OCI-LY7 (cell line): ENCODE measurements at regions of chr15 and their contacts with region 1.

Region 1: GRCh38 chr15:98442379-98442833 is 205.9 kb upstream of the IGF1R start:
- DNase-seq: peak; percentile 57
- H3K4me3 ChIP-seq: no peak overlapping the region
- H3K27ac ChIP-seq: no peak overlapping the region
- H3K4me1 ChIP-seq: no peaks in the 10 kb centered on the region
- CTCF ChIP-seq: peak; percentile 87

Region 2: DNA sequence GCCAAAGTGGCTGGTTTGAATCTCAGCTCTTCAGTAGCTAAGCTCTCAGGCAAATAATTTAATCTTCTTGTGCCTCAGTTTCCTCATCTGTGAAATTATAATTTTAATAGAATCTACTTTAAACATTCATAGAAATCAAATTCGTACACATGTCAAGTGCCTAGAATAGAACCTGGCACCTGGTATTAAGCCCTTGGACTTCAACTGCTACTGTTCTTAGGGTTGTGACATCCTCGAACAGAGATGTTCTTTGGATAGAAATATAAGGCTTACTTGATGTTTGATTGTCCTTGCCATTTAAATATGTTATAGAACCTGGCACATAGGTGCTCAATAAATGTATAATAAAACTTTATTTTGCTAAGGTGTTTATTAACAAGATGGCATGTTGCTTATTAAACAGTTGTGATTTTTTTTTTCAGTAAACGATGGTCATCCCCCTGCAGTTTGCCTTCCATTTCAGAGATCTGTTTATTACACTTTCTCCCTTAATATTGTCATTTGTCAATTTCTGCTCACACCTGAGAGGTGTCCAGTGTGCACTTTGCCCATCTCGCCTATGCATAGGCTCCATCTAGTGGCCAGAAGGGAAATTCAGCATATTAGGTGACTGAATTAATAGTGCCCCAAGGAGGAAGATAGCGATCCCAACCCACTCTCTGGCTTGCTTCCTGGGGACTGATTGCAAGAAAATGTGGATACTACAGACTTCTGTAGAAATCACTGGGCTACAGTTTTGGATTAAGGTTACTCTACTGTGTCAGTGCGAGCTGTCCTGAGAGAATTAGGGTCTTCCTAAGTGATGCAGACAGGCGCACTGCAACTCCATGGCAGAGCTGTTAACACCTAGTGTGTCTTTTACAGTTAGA is 216.7 kb after region 1 on chr15:
- CTCF ChIA-PET with region 1: no interaction called
- POLR2A ChIA-PET with region 1: no interaction called
- intact Hi-C with region 1: loop called (anchors 5 kb)
- DNase-seq: peak; percentile 68
- H3K4me3 ChIP-seq: no peak overlapping the region
- H3K27ac ChIP-seq: no peak overlapping the region
- H3K4me1 ChIP-seq: peaks cover 2% of the 10 kb centered on the region
- CTCF ChIP-seq: peak; percentile 94

Region 3: GRCh38 chr15:99213187-99213811 is 770.9 kb after region 1 on chr15:
- CTCF ChIA-PET with region 1: no interaction called
- POLR2A ChIA-PET with region 1: no interaction called
- intact Hi-C with region 1: loop called (anchors 5 kb)
- DNase-seq: peak; percentile 58
- H3K4me3 ChIP-seq: no peak overlapping the region
- H3K27ac ChIP-seq: no peak overlapping the region
- H3K4me1 ChIP-seq: no peaks in the 10 kb centered on the region
- CTCF ChIP-seq: peak; percentile 93